H1 (cell line): ENCODE measurements at regions of chr1 and their contacts with region 1.

Region 1: GRCh38 chr1:67347688-67348472 is 40.2 kb downstream of the IL12RB2 start:
- DNase-seq: peak; percentile 13 to 56
- H3K4me3 ChIP-seq: no peak overlapping the region
- H3K27ac ChIP-seq: no peak overlapping the region
- H3K4me1 ChIP-seq: peaks cover 0 to 4% (median 3%) of the 10 kb centered on the region in 4 experiments; a peak in 1 of 7 replicates
- H3K27me3 ChIP-seq: no peaks in the 10 kb centered on the region
- CTCF ChIP-seq: peak; percentile 72 to 85 (median 75)
- EP300 ChIP-seq: no peak
- POLR2A ChIP-seq: no peak
- RAD21 ChIP-seq: peak; percentile 85

Region 2: GRCh38 chr1:67250051-67250653 is 97.7 kb before region 1 on chr1:
- CTCF ChIA-PET with region 1: no interaction called
- POLR2A ChIA-PET with region 1: no interaction called
- DNase-seq: no peak
- H3K4me3 ChIP-seq: peak overlapping the region in 1 of 4 experiments; percentile 3; a peak in 1 of 8 replicates
- H3K27ac ChIP-seq: no peak overlapping the region
- H3K4me1 ChIP-seq: no peaks in the 10 kb centered on the region
- H3K27me3 ChIP-seq: no peaks in the 10 kb centered on the region
- CTCF ChIP-seq: no peak
- EP300 ChIP-seq: no peak
- POLR2A ChIP-seq: no peak
- RAD21 ChIP-seq: no peak

Region 3: GRCh38 chr1:67261680-67262079 is 86.2 kb before region 1 on chr1:
- CTCF ChIA-PET with region 1: interaction called, 11 read pairs
- POLR2A ChIA-PET with region 1: no interaction called
- DNase-seq: peak in 1 of 2 experiments; percentile 46
- H3K4me3 ChIP-seq: peak overlapping the region in 1 of 4 experiments; percentile 35; a peak in 1 of 8 replicates
- H3K27ac ChIP-seq: no peak overlapping the region
- H3K4me1 ChIP-seq: peaks cover 0 to 14% (median 8%) of the 10 kb centered on the region in 4 experiments; a peak in 3 of 7 replicates
- H3K27me3 ChIP-seq: no peaks in the 10 kb centered on the region
- CTCF ChIP-seq: peak; percentile 18 to 63 (median 33); a peak in 3 of 4 replicates
- EP300 ChIP-seq: no peak
- POLR2A ChIP-seq: no peak
- RAD21 ChIP-seq: peak in 1 of 2 experiments; percentile 3; a peak in 1 of 4 replicates

Region 4: DNA sequence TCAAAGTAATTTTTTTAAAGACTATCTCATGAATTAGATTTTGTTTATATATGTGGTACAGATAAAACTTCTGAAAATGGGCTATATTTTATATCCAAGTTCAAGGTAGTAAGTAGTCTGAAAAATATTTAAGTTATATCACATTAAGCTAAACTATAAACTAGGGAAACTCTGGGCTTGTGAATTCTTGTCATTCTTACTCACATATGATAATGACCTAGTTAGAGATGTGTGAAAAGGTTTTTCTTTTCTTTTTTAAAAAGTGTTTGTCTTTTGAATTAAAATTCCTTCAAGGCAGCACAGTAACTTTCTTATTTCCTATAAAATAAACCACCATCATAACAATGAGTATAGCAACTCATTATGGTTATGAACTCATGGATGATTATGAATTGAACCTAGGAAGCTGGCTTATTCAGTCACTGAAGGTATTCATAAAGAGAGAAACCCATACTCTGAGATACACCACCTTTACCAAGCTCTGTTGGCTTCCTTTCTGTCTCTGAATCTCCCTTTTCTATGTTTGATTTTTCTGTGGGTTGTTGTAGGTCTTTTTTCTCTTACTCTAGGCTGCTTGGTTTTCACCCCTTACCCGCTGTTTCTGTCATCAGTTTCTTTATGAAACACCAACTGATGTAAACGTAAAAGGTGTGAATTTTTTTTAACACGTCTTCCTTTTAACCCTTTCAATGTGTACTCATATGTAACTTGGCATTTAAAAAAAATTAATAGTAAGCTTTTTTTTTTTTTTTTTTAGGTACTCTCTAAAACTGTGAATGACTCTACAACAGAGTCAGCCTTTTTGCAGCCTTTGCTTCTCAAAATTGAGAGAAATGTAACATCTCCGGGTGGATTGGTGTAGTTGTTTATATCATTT is 15.0 kb before region 1 on chr1:
- CTCF ChIA-PET with region 1: interaction called, 53 read pairs
- POLR2A ChIA-PET with region 1: no interaction called
- DNase-seq: no peak
- H3K4me3 ChIP-seq: no peak overlapping the region
- H3K27ac ChIP-seq: no peak overlapping the region
- H3K4me1 ChIP-seq: peaks cover 0 to 4% (median 0%) of the 10 kb centered on the region in 4 experiments; a peak in 1 of 7 replicates
- H3K27me3 ChIP-seq: no peaks in the 10 kb centered on the region
- CTCF ChIP-seq: no peak
- EP300 ChIP-seq: no peak
- POLR2A ChIP-seq: no peak
- RAD21 ChIP-seq: no peak

Region 5: DNA sequence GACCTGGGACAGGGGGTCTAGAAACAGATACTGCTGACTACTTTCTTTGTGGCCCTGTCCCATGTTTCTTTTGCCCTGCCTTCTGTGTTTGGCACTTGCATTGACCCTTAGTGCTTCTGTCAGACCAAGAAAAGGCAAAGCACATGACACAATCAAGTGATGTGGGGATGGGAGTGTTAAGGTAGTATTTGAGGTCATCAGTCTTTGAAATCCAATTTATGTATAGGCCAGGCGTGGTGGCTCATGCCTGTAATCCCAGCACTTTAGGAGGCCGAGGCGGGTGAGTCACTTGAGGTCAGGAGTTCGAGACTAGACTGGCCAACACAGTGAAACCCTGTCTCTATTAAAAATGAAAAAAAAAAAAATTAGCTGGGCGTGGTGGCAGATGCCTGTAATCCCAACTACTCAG is 56.3 kb after region 1 on chr1:
- CTCF ChIA-PET with region 1: interaction called, 20 read pairs
- POLR2A ChIA-PET with region 1: interaction called, 25 read pairs
- DNase-seq: no peak
- H3K4me3 ChIP-seq: no peak overlapping the region
- H3K27ac ChIP-seq: no peak overlapping the region
- H3K4me1 ChIP-seq: peaks cover 1 to 12% (median 7%) of the 10 kb centered on the region in 4 experiments; a peak in 4 of 7 replicates
- H3K27me3 ChIP-seq: no peaks in the 10 kb centered on the region
- CTCF ChIP-seq: no peak
- EP300 ChIP-seq: no peak
- POLR2A ChIP-seq: peak in 1 of 2 experiments; percentile 42; a peak in 1 of 3 replicates
- RAD21 ChIP-seq: no peak

Region 6: GRCh38 chr1:67430352-67431155 is 82.7 kb after region 1 on chr1 and contains the start of gene SERBP1:
- CTCF ChIA-PET with region 1: interaction called, 21 read pairs
- POLR2A ChIA-PET with region 1: interaction called, 33 read pairs
- DNase-seq: peak; percentile 92 to 95
- H3K4me3 ChIP-seq: peak within 1 kb of the TSS; percentile 95 to 100 (median 98)
- H3K27ac ChIP-seq: peak within 1 kb of the TSS; percentile 94
- H3K4me1 ChIP-seq: peaks cover 0 to 12% (median 2%) of the 10 kb centered on the region in 4 experiments; a peak in 3 of 7 replicates
- H3K27me3 ChIP-seq: no peaks in the 10 kb centered on the region
- CTCF ChIP-seq: no peak
- EP300 ChIP-seq: no peak
- POLR2A ChIP-seq: peak; percentile 58 to 74
- RAD21 ChIP-seq: no peak; a peak in 1 of 4 replicates
- total RNA-seq, gene SERBP1: 536 and 539 TPM in 2 replicates

Region 7: DNA sequence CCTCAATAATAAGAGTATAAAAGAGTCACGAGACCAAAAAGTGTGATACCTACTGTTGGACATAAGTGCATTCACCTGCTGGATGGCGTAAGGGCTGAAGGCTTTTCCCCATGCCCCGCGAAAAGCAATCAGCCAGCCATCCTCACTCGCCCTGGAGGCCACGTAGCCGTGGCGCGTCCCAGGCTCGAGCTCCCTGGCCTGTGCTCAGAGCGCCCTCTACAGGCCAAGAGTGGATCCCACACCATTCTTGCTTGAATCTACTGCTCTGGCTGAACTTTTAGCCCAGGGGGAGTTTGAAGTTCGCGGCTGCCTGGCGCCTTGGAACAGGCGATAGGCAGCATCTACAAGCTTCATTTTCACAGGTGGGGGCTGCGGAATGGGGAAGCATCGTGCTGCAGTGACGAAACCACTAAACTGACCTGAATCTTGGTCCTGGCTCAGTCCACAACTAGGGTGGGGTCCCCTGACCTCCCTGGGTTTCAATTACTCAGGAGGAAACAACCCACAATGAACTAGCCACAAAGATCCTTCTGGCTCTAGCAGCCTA is 152.6 kb after region 1 on chr1:
- CTCF ChIA-PET with region 1: interaction called, 91 read pairs
- POLR2A ChIA-PET with region 1: interaction called, 3 read pairs
- DNase-seq: peak; percentile 75 to 94
- H3K4me3 ChIP-seq: peak overlapping the region in 3 of 4 experiments; percentile 4 to 32 (median 30); a peak in 4 of 8 replicates
- H3K27ac ChIP-seq: no peak overlapping the region
- H3K4me1 ChIP-seq: peaks cover 0 to 3% (median 1%) of the 10 kb centered on the region in 4 experiments; a peak in 2 of 7 replicates
- H3K27me3 ChIP-seq: peaks cover 0 to 8% (median 7%) of the 10 kb centered on the region in 4 experiments; a peak in 6 of 7 replicates
- CTCF ChIP-seq: peak; percentile 94 to 100 (median 98)
- EP300 ChIP-seq: no peak
- POLR2A ChIP-seq: no peak
- RAD21 ChIP-seq: peak; percentile 100